ENCODE measurements at regions of chr2 and their contacts with region 1.

Region 1: GRCh38 chr2:84925724-84926376 is 20.4 kb downstream of the TMSB10 start:
- DNase-seq: peak; percentile 95
- H3K4me3 ChIP-seq: peak overlapping the region in 3 of 4 donors; percentile 30 to 43 (median 32)
- H3K27ac ChIP-seq: peak overlapping the region in 2 of 4 donors; percentile 21 to 22
- H3K4me1 ChIP-seq: peaks cover 0 to 22% (median 18%) of the 10 kb centered on the region in 4 donors
- H3K27me3 ChIP-seq: no peaks in the 10 kb centered on the region
- CTCF ChIP-seq: peak; percentile 87 to 96 (median 88)
- EP300 ChIP-seq: no peak
- POLR2A ChIP-seq: no peak

Region 2: DNA sequence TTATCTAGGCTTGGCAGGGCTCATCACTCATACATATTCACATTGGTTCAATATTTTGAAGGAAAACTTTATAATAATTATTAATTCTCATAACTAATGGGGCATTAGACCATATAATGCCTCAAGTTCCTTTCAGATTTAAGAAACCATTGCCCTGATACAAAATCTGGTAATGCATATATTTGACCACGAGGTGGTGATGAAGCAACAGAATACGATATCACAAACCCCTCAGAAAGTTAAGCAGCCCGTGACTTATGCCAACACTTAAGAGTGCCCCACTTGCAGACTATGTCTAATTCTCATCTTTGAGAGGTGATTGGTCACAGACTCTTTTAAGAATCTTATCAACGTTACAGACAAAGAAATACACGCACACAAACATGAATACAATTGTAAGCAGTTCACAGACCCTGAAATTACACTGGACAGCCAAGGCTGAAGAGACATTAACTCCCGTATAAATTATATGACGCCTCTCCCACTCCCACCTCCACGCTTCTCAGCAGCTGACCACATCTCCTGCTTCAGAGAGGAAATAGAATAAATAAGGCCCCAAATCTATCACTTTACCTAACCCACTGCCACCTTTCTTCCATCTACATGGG is 430.2 kb before region 1 on chr2:
- intact Hi-C with region 1: loop called (anchors 5 kb)
- DNase-seq: no peak
- H3K4me3 ChIP-seq: no peak overlapping the region
- H3K27ac ChIP-seq: no peak overlapping the region
- H3K4me1 ChIP-seq: no peaks in the 10 kb centered on the region
- H3K27me3 ChIP-seq: no peaks in the 10 kb centered on the region
- CTCF ChIP-seq: peak; percentile 23 to 68 (median 58)
- EP300 ChIP-seq: no peak
- POLR2A ChIP-seq: no peak

Region 3: GRCh38 chr2:84768840-84769239 is 157.0 kb before region 1 on chr2:
- intact Hi-C with region 1: no loop called
- DNase-seq: no peak
- H3K4me3 ChIP-seq: no peak overlapping the region
- H3K27ac ChIP-seq: no peak overlapping the region
- H3K4me1 ChIP-seq: no peaks in the 10 kb centered on the region
- H3K27me3 ChIP-seq: no peaks in the 10 kb centered on the region
- CTCF ChIP-seq: no peak
- EP300 ChIP-seq: no peak
- POLR2A ChIP-seq: no peak

Region 4: GRCh38 chr2:84881581-84882414 is 44.1 kb before region 1 on chr2:
- intact Hi-C with region 1: loop called (anchors 1 kb)
- DNase-seq: peak; percentile 81
- H3K4me3 ChIP-seq: peak overlapping the region; percentile 24 to 53 (median 46)
- H3K27ac ChIP-seq: no peak overlapping the region
- H3K4me1 ChIP-seq: peaks cover 0 to 29% (median 23%) of the 10 kb centered on the region in 4 donors
- H3K27me3 ChIP-seq: peaks cover 18 to 59% (median 26%) of the 10 kb centered on the region in 3 donors
- CTCF ChIP-seq: peak; percentile 28 to 76 (median 66)
- EP300 ChIP-seq: no peak
- POLR2A ChIP-seq: no peak

Region 5: DNA sequence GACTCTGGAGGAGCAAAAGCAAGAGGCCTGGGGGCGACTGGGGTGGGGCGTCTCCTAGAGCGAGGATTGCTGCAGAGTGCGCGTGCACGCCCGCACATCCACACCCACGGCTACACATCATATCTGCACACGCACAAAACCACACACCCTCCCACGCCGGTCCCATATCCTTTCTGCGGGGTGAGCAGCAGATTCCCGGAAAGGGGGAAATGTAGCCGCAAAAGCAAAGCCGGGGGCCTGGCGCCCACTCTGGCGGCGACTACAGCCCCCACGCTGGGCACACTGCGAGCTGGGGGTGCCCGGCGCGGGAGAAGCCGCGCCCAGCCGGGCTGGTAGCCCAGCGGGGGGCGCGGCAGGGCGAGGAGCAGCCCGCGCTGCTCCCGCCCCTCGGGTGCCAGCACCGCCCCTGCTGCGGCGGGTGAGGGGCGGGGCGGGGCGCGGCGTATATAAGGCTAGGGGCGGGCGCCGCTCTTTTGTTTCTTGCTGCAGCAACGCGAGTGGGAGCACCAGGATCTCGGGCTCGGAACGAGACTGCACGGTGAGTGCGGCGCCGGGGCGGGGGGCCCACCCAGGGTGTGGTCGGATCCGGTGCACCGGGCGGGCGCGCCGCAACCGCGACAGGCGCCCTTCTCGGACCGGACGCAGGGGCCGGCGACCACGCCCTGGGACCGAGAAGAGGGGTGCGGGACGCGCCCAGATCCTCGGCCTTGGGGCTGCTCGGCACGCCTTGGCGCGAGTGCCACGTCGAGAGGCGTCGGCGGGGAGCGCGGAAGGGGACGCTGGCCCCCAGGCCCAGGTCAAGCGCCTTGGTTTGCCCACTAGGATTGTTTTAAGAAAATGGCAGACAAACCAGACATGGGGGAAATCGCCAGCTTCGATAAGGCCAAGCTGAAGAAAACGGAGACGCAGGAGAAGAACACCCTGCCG is 20.4 kb before region 1 on chr2 and contains the start of gene TMSB10:
- intact Hi-C with region 1: loop called (anchors 2 kb)
- DNase-seq: peak; percentile 94
- H3K4me3 ChIP-seq: peak within 1 kb of the TSS; percentile 77 to 99 (median 98)
- H3K27ac ChIP-seq: peak within 1 kb of the TSS; percentile 84 to 98 (median 94)
- H3K4me1 ChIP-seq: peaks cover 0 to 19% (median 10%) of the 10 kb centered on the region in 4 donors
- H3K27me3 ChIP-seq: no peaks in the 10 kb centered on the region
- CTCF ChIP-seq: no peak
- EP300 ChIP-seq: no peak
- POLR2A ChIP-seq: peak; percentile 77 to 83
- total RNA-seq, gene TMSB10: 1,887 to 2,459 (median 2,033) TPM

Region 6: GRCh38 chr2:85302121-85302520 is 376.3 kb after region 1 on chr2:
- intact Hi-C with region 1: loop called (anchors 5 kb)
- DNase-seq: no peak
- H3K4me3 ChIP-seq: no peak overlapping the region
- H3K27ac ChIP-seq: peak overlapping the region in 1 of 4 donors; percentile 12
- H3K4me1 ChIP-seq: peaks cover 0 to 17% (median 5%) of the 10 kb centered on the region in 4 donors
- H3K27me3 ChIP-seq: no peaks in the 10 kb centered on the region
- CTCF ChIP-seq: no peak
- EP300 ChIP-seq: no peak
- POLR2A ChIP-seq: no peak

Measured in sigmoid colon (tissue), 7 donors.